HCT116 (cell line): ENCODE measurements at regions of chr3 and their contacts with region 1.

Region 1: GRCh38 chr3:111936191-111936841 is 42.5 kb upstream of the ABHD10 start:
- DNase-seq: peak; percentile 60
- ATAC-seq: peak; percentile 78
- H3K4me3 ChIP-seq: peak overlapping the region in 1 of 2 experiments; percentile 0; a peak in 1 of 4 replicates
- H3K27ac ChIP-seq: peak overlapping the region; percentile 96
- H3K4me1 ChIP-seq: peaks cover 66 to 78% of the 10 kb centered on the region in 2 experiments
- H3K27me3 ChIP-seq: no peaks in the 10 kb centered on the region
- CTCF ChIP-seq: no peak
- POLR2A ChIP-seq: no peak
- RAD21 ChIP-seq: 0 out of 2 replicates have a peak, but pooled peaks have one; percentile 2

Region 2: DNA sequence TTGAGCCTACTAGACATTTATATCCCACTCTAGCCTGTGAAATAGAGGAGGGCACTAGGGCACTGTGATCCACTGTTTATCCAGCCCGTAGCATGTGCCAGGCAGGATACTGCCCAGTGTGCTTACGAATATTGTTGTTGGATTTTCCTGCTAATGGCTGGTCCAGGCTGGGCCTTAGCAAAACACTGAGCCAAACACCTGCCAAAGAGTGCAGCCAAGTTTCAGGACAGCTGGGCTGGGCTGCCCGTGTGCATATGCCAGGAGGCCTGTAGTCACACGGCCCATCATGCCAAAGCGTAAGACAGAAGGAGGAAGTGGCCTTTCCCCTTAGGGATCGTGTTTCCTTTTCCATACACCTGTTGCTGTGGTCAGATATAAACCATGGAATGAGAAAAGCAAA is 12.0 kb before region 1 on chr3:
- CTCF ChIA-PET with region 1: no interaction called
- POLR2A ChIA-PET with region 1: interaction called, 30 read pairs
- RAD21 ChIA-PET with region 1: no interaction called
- intact Hi-C with region 1: no loop called
- DNase-seq: no peak
- ATAC-seq: no peak
- H3K4me3 ChIP-seq: no peak overlapping the region
- H3K27ac ChIP-seq: peak overlapping the region; percentile 96
- H3K4me1 ChIP-seq: peaks cover 69 to 95% of the 10 kb centered on the region in 2 experiments
- H3K27me3 ChIP-seq: no peaks in the 10 kb centered on the region
- CTCF ChIP-seq: no peak
- POLR2A ChIP-seq: no peak
- RAD21 ChIP-seq: no peak

Region 3: GRCh38 chr3:111947231-111947630 is 10.9 kb after region 1 on chr3:
- CTCF ChIA-PET with region 1: no interaction called
- POLR2A ChIA-PET with region 1: interaction called, 10 read pairs
- RAD21 ChIA-PET with region 1: no interaction called
- intact Hi-C with region 1: no loop called
- DNase-seq: no peak
- ATAC-seq: peak; percentile 52
- H3K4me3 ChIP-seq: no peak overlapping the region
- H3K27ac ChIP-seq: peak overlapping the region; percentile 75
- H3K4me1 ChIP-seq: peaks cover 26 to 44% of the 10 kb centered on the region in 2 experiments
- H3K27me3 ChIP-seq: no peaks in the 10 kb centered on the region
- CTCF ChIP-seq: no peak
- POLR2A ChIP-seq: no peak
- RAD21 ChIP-seq: no peak